ENCODE measurements at regions of chr19 and their contacts with region 1.

Region 1: GRCh38 chr19:40348125-40348913 is at the starts of genes C19orf47 and PLD3:
- DNase-seq: peak; percentile 96
- H3K4me3 ChIP-seq: peak within 1 kb of the TSS; percentile 80 to 92 (median 87)
- H3K27ac ChIP-seq: 0 out of 2 replicates have a peak within 1 kb of the TSS, but pooled peaks have one; percentile 42
- H3K4me1 ChIP-seq: peaks cover 0 to 2% (median 0%) of the 10 kb centered on the region in 4 experiments; a peak in 1 of 7 replicates
- H3K27me3 ChIP-seq: no peaks in the 10 kb centered on the region
- CTCF ChIP-seq: no peak
- EP300 ChIP-seq: 0 out of 3 replicates have a peak, but pooled peaks of 1 of the 2 experiments have one; percentile 1
- POLR2A ChIP-seq: peak in 1 of 2 experiments; percentile 75; a peak in 1 of 3 replicates
- RAD21 ChIP-seq: 0 out of 4 replicates have a peak, but pooled peaks of 1 of the 2 experiments have one; percentile 2
- total RNA-seq, gene C19orf47: 16.5 and 17.8 TPM in 2 replicates
- total RNA-seq, gene PLD3: 180 and 189 TPM in 2 replicates

Region 2: DNA sequence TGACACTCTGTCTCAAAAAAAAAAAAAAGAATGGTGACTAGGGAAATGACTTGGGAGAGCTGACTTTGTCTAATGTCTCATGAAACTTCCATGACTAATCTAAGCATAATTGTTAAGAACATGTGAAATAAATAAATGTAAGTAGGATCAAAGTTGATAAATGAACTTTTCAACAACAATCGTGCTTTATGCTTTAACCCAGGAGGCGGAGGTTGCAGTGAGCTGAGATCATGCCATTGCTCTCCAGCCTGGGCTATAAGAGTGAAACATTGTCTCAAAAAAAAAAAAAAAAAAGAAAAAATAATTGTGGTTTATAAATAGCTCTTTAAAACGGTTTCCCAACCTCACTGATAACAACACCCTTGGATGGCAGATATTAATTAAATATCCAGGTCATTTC is 50.3 kb before region 1 on chr19:
- CTCF ChIA-PET with region 1: no interaction called
- POLR2A ChIA-PET with region 1: no interaction called
- DNase-seq: no peak
- H3K4me3 ChIP-seq: no peak overlapping the region
- H3K27ac ChIP-seq: no peak overlapping the region
- H3K4me1 ChIP-seq: no peaks in the 10 kb centered on the region
- H3K27me3 ChIP-seq: no peaks in the 10 kb centered on the region
- CTCF ChIP-seq: no peak
- EP300 ChIP-seq: no peak
- POLR2A ChIP-seq: no peak
- RAD21 ChIP-seq: no peak

Region 3: DNA sequence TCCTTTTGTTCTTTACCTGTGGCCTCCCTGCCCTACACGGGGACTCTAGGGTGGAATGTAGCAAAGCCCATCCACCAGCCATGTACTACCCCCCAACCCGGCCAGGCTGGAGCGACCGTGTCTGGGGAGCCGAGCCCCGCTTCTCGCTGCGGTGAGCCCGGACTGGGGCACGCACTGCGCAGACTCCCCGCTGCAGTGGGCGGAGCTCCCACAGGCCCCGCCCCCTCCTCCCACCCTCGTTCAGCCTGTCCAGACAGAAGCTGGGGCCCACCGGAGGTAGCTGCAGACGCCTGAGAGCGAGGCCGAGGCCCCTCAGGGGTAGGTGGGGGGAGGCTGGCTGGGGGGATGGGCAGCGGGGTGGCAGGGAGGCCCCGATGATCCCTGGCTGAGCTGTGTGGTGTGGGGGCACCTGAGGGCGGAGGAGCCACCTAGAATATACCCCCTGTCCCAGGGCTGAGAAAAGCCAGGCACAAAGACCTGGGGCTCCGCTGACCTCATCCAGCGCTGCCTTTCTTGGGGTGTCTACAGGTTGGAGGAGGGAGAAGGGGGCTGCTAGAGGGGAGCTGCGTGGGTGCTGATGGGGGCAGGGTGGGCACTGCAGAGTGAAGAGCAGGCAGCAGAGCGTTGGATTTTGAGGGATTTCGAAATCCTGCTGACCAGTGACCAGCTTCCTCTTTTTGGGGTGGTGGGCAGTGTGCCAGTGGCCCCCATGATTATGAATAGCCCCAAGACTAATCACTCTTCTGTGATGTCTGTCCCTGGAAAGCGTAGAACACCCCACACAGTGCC is 17.5 kb after region 1 on chr19:
- CTCF ChIA-PET with region 1: interaction called, 4 read pairs
- POLR2A ChIA-PET with region 1: interaction called, 12 read pairs
- DNase-seq: peak; percentile 70 to 86
- H3K4me3 ChIP-seq: peak overlapping the region; percentile 58 to 76 (median 60)
- H3K27ac ChIP-seq: 0 out of 2 replicates have a peak overlapping the region, but pooled peaks have one; percentile 5
- H3K4me1 ChIP-seq: peaks cover 0 to 16% (median 10%) of the 10 kb centered on the region in 4 experiments; a peak in 6 of 7 replicates
- H3K27me3 ChIP-seq: no peaks in the 10 kb centered on the region
- CTCF ChIP-seq: no peak
- EP300 ChIP-seq: no peak
- POLR2A ChIP-seq: no peak; a peak in 1 of 3 replicates
- RAD21 ChIP-seq: no peak

Region 4: GRCh38 chr19:40403262-40403984 is 55.1 kb after region 1 on chr19:
- CTCF ChIA-PET with region 1: no interaction called
- POLR2A ChIA-PET with region 1: no interaction called
- DNase-seq: peak; percentile 84 to 100
- H3K4me3 ChIP-seq: peak overlapping the region; percentile 48 to 77 (median 64)
- H3K27ac ChIP-seq: no peak overlapping the region
- H3K4me1 ChIP-seq: peaks cover 0 to 7% (median 3%) of the 10 kb centered on the region in 4 experiments; a peak in 5 of 7 replicates
- H3K27me3 ChIP-seq: peaks cover 0 to under 1% (median under 1%) of the 10 kb centered on the region in 4 experiments; a peak in 4 of 7 replicates
- CTCF ChIP-seq: no peak
- EP300 ChIP-seq: no peak
- POLR2A ChIP-seq: no peak
- RAD21 ChIP-seq: no peak